Gastrocnemius medialis (tissue), 4 donors: ENCODE measurements at regions of chr4 and their contacts with region 1.

Region 1: DNA sequence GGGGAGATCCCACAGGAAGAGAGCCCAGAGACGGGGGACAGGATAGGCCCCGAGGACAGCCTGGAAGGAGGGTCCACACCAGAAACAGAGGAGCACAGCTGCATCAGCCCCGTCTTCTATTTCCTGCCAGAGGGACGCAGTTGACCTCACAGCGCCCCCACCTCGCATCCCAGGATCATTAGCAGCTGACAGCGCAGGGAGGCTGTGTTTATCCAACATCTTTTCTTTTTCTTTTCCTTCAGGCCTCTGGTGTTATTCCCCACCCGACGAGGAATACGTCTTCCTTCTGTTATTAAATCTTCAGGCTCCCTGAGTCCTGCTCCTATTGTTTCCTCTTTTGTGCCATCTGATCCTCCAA is 75.4 kb downstream of the DCHS2 start:
- DNase-seq: no peak
- ATAC-seq: peak; percentile 21 to 36
- H3K4me3 ChIP-seq: peak overlapping the region; percentile 48 to 63 (median 55)
- H3K27ac ChIP-seq: peak overlapping the region; percentile 14 to 61 (median 46)
- H3K4me1 ChIP-seq: peaks cover 0 to 8% of the 10 kb centered on the region in 2 donors
- H3K27me3 ChIP-seq: no peaks in the 10 kb centered on the region
- CTCF ChIP-seq: no peak
- POLR2A ChIP-seq: no peak

Region 2: DNA sequence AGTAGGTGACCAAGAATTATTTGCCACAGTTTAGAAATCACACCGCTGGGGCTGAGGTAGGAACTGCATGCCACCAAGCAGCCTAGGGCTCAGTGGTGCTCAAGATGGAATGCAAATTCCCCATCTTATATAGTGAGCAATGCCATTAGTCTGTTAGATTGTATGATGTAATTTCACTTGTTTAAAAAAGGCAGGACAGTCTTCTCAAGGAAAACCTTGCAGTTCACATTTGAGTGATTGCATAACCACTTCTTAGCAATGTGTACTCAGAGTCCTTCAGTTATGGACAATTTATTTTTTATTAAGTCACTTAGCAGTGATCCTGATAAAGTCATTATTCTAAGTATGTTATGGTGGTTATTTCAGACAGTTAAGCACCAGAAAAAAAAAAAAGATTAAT is 484.4 kb before region 1 on chr4:
- in situ Hi-C with region 1: no loop called
- intact Hi-C with region 1: no loop called
- DNase-seq: no peak
- ATAC-seq: peak; percentile 60
- H3K4me3 ChIP-seq: no peak overlapping the region
- H3K27ac ChIP-seq: no peak overlapping the region
- H3K4me1 ChIP-seq: no peaks in the 10 kb centered on the region
- H3K27me3 ChIP-seq: no peaks in the 10 kb centered on the region
- CTCF ChIP-seq: no peak
- POLR2A ChIP-seq: no peak

Region 3: GRCh38 chr4:154491341-154492271 is 75.4 kb after region 1 on chr4 and contains the start of gene DCHS2:
- in situ Hi-C with region 1: no loop called
- intact Hi-C with region 1: loop called (anchors 10 kb)
- DNase-seq: no peak
- ATAC-seq: no peak
- H3K4me3 ChIP-seq: peak within 1 kb of the TSS; percentile 38 to 39 (median 38)
- H3K27ac ChIP-seq: no peak within 1 kb of the TSS
- H3K4me1 ChIP-seq: peaks cover 4 to 11% of the 10 kb centered on the region in 2 donors
- H3K27me3 ChIP-seq: peaks cover 17 to 42% (median 34%) of the 10 kb centered on the region in 3 donors
- CTCF ChIP-seq: no peak
- POLR2A ChIP-seq: no peak
- total RNA-seq, gene DCHS2: under 0.01 to 0.18 (median 0.04) TPM

Region 4: GRCh38 chr4:154590329-154591006 is 174.3 kb after region 1 on chr4 and contains the start of gene FGA:
- in situ Hi-C with region 1: no loop called
- intact Hi-C with region 1: no loop called
- DNase-seq: no peak
- ATAC-seq: no peak
- H3K4me3 ChIP-seq: no peak within 1 kb of the TSS
- H3K27ac ChIP-seq: no peak within 1 kb of the TSS
- H3K4me1 ChIP-seq: no peaks in the 10 kb centered on the region
- H3K27me3 ChIP-seq: peaks cover 0 to 3% (median 0%) of the 10 kb centered on the region in 3 donors
- CTCF ChIP-seq: no peak
- POLR2A ChIP-seq: no peak
- total RNA-seq, gene FGA: 22.2 to 49.0 TPM in 2 of 4 donors, not detected in the others